Endothelial cell of umbilical vein (primary cell): ENCODE measurements at regions of chr12 and their contacts with region 1.

Region 1: GRCh38 chr12:57309420-57309819 is 58.4 kb upstream of the STAC3 start:
- DNase-seq: peak; percentile 48
- H3K4me3 ChIP-seq: no peak overlapping the region
- H3K27ac ChIP-seq: peak overlapping the region; percentile 28
- H3K4me1 ChIP-seq: peaks cover 14% of the 10 kb centered on the region
- H3K27me3 ChIP-seq: no peaks in the 10 kb centered on the region
- CTCF ChIP-seq: no peak
- POLR2A ChIP-seq: no peak

Region 2: DNA sequence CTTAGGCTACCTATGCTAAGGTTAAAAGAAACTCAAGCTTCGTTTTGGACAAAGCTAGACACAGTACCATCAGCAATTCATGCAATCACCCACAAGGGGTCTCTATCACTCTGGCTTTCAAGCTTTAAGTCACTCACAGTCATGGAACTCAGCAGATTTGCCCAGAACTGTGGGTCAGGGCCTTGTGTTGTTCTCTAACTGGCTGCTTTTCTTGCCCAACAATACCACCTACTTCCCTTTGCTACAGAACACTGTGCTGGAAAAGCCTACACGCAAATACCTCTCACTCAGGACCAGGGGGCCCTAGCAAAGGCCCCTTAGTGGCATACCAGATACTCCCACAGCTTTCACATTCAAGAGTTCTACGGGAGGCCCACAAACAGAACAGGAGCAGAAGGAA is 239.9 kb before region 1 on chr12:
- CTCF ChIA-PET with region 1: no interaction called
- POLR2A ChIA-PET with region 1: no interaction called
- dilution Hi-C with region 1: no loop called
- intact Hi-C with region 1: no loop called
- DNase-seq: peak; percentile 80
- H3K4me3 ChIP-seq: no peak overlapping the region
- H3K27ac ChIP-seq: no peak overlapping the region
- H3K4me1 ChIP-seq: no peaks in the 10 kb centered on the region
- H3K27me3 ChIP-seq: no peaks in the 10 kb centered on the region
- CTCF ChIP-seq: peak; percentile 75 to 80
- POLR2A ChIP-seq: no peak

Region 3: DNA sequence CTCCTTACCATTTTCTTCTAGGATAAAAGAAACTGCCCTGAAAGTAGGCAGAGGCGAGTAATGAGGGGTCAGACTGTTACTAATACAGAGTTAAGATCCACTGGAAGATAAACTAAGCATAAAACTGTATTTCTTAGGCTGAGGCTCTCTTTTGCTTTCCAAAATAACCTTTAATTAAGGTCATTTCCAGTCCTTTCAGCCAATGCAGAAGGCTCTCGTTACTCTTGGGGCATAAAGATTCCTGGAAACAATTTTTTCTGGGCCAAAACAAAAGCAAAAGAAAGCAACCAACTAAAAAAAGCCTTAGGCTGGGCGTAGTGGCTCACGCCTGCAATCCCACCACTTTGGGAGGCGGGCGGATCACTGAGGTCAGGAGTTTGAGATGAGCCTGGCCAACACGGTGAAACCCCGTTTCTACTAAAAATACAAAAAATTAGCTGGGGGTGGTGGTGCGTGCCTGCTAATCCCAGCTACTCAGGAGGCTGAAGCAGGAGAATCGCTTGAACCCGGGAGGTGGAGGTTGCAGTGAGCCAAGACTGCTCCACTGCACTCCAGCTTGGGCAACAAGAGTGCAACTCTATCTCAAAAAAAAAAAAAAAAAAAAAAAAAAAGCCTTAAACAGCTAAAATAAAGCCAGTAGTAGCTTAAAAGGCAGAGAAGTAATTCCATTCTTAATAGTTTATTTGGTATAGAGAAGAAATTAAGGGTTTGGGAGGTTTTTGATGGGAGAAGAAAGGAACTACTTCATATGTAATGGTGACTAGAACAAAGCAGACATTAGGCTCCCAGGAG is 10.5 kb after region 1 on chr12:
- CTCF ChIA-PET with region 1: interaction called, 39 read pairs
- POLR2A ChIA-PET with region 1: no interaction called
- dilution Hi-C with region 1: no loop called
- intact Hi-C with region 1: no loop called
- DNase-seq: peak; percentile 28
- H3K4me3 ChIP-seq: no peak overlapping the region
- H3K27ac ChIP-seq: no peak overlapping the region
- H3K4me1 ChIP-seq: no peaks in the 10 kb centered on the region
- H3K27me3 ChIP-seq: no peaks in the 10 kb centered on the region
- CTCF ChIP-seq: no peak
- POLR2A ChIP-seq: no peak

Region 4: DNA sequence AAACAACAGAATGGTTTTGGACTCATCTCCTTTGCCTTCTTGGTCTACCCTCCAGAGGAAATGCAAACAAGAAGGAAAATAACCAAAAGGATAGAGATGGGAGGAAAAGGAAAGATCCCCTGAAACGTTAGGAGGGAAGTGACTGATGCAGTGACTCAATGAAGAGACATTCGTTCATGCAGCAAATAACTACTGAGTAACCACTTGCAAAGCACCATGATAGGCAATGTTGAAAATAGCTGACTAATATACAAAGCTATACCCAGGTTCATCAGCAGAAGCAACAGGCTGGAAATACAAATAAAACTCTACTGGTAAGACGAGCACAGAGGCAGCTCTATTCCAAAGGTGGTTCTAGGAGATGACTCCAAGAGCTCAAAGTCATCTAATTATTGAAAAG is 79.6 kb after region 1 on chr12:
- CTCF ChIA-PET with region 1: interaction called, 11 read pairs
- POLR2A ChIA-PET with region 1: no interaction called
- dilution Hi-C with region 1: no loop called
- intact Hi-C with region 1: no loop called
- DNase-seq: peak; percentile 72
- H3K4me3 ChIP-seq: no peak overlapping the region
- H3K27ac ChIP-seq: peak overlapping the region; percentile 52
- H3K4me1 ChIP-seq: peaks cover 22% of the 10 kb centered on the region
- H3K27me3 ChIP-seq: no peaks in the 10 kb centered on the region
- CTCF ChIP-seq: no peak
- POLR2A ChIP-seq: no peak

Region 5: GRCh38 chr12:57430931-57431720 is 121.7 kb after region 1 on chr12 and contains the start of gene R3HDM2:
- CTCF ChIA-PET with region 1: interaction called, 7 read pairs
- POLR2A ChIA-PET with region 1: no interaction called
- dilution Hi-C with region 1: no loop called
- intact Hi-C with region 1: loop called (anchors 5 kb)
- DNase-seq: peak; percentile 95
- H3K4me3 ChIP-seq: peak within 1 kb of the TSS; percentile 46 to 75 (median 69)
- H3K27ac ChIP-seq: peak within 1 kb of the TSS; percentile 64
- H3K4me1 ChIP-seq: peaks cover 6% of the 10 kb centered on the region
- H3K27me3 ChIP-seq: no peaks in the 10 kb centered on the region
- CTCF ChIP-seq: no peak
- POLR2A ChIP-seq: peak; percentile 96
- total RNA-seq, gene R3HDM2: 31.3 and 36.6 TPM in 2 replicates